ENCODE measurements at regions of chr7 and their contacts with region 1.

Region 1: GRCh38 chr7:28626624-28627262 is 214.4 kb downstream of the CREB5 start:
- DNase-seq: no peak
- H3K4me3 ChIP-seq: no peak overlapping the region
- H3K27ac ChIP-seq: no peak overlapping the region
- H3K27me3 ChIP-seq: no peaks in the 10 kb centered on the region
- CTCF ChIP-seq: peak; percentile 18 to 78 (median 64)

Region 2: DNA sequence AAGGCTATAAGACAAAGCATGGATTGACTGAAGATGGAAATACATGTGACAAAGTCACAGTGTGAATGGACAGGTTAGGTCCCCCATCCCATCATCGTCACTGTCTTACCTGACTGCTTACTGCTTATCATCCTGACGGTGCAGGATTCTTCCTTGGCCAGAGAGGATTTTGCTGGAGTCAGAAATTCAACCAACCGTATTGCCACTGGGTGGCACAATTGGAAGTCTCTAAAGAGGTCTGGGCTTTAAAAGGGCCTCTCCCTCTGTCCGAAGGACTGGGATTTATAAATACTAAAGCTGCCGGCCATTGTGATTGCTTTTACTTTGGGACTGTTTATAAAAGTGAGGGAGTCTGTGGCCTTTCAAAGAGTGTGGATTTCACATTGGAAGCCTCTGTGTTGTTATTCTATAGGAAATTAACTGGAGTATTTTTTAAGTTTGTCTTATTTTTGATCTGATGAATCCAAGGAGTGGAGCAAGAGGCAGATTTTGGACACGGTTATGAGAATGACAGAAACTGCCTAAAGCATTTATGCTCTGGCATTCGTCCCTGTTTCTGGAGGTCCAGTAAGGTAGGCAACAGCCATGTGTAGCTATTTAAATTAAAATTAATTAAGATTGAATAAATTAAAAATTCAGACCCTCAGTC is 327.7 kb before region 1 on chr7:
- intact Hi-C with region 1: loop called in 1 of 2 experiments (anchors 10 kb)
- DNase-seq: peak in 6 of 10 donors; percentile 43 to 63 (median 48)
- H3K4me3 ChIP-seq: peak overlapping the region in 3 of 59 donors; percentile 4 to 24 (median 17)
- H3K27ac ChIP-seq: peak overlapping the region in 30 of 59 donors; percentile 0 to 72 (median 28)
- H3K27me3 ChIP-seq: no peaks in the 10 kb centered on the region
- CTCF ChIP-seq: peak; percentile 33 to 80 (median 62)

Region 3: GRCh38 chr7:28389504-28390395 is 237.0 kb before region 1 on chr7:
- intact Hi-C with region 1: loop called (anchors 5 kb)
- DNase-seq: peak in 1 of 10 donors; percentile 33
- H3K4me3 ChIP-seq: peak overlapping the region in 58 of 59 donors; percentile 8 to 67 (median 44)
- H3K27ac ChIP-seq: peak overlapping the region in 34 of 59 donors; percentile 0 to 79 (median 52)
- H3K27me3 ChIP-seq: peaks cover 0 to 4% (median 0%) of the 10 kb centered on the region in 45 donors
- CTCF ChIP-seq: peak; percentile 73 to 92 (median 84)